ENCODE measurements at regions of chr6 and their contacts with region 1.

Region 1: GRCh38 chr6:142045380-142046278 is 87.1 kb upstream of the GJE1 start:
- DNase-seq: no peak
- H3K4me3 ChIP-seq: no peak overlapping the region
- H3K27ac ChIP-seq: no peak overlapping the region
- H3K4me1 ChIP-seq: peaks cover 3% of the 10 kb centered on the region
- H3K27me3 ChIP-seq: no peaks in the 10 kb centered on the region
- CTCF ChIP-seq: peak; percentile 26 to 38

Region 2: DNA sequence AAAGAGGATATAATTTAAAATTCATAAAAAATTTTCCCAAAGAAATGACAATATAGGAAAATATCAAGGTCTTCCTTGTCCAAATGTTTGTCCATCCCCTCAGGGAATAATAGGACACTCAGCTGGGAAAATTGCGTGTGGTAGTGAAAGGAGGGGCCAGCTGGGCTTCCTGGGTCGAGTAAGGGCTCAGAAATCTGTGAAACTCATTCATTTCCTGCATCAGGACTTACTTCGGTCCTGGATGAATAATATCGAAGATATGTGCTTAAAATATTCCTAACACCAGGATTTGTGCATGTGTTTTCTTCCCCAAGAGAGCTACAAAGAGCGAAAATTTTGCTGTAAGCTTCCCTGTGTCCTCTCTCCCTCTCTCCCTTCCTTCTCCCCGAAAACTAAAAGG is 31.1 kb before region 1 on chr6:
- CTCF ChIA-PET with region 1: no interaction called
- dilution Hi-C with region 1: no loop called
- in situ Hi-C with region 1: no loop called
- intact Hi-C with region 1: loop called (anchors 2 kb)
- DNase-seq: peak; percentile 78
- H3K4me3 ChIP-seq: peak overlapping the region in 1 of 3 experiments; percentile 19
- H3K27ac ChIP-seq: peak overlapping the region; percentile 87
- H3K4me1 ChIP-seq: peaks cover 36% of the 10 kb centered on the region
- H3K27me3 ChIP-seq: no peaks in the 10 kb centered on the region
- CTCF ChIP-seq: no peak